Stomach (tissue), 19 donors: ENCODE measurements at regions of chr2 and their contacts with region 1.

Region 1: DNA sequence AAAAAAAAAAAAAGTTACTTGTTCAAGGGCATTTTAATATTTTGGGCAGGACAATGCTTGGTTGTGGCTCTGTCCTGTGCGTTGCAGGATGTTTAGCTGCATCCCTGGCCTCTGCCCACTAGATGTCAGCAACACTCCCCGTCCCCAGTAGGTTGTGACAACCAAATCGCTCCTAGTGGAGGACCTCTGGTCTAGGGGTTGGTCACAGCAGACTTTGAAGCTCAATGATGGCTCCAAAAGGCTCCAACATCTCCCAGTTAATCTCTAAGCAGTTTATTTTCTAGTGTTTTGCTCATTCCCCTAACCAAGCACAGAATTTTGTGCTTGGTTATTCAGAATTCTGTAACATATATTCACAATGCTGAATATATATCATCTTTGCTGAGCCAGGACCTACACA is 67.0 kb downstream of the CHRNA1 start:
- DNase-seq: peak; percentile 51 to 82
- H3K4me3 ChIP-seq: no peak overlapping the region
- H3K27ac ChIP-seq: no peak overlapping the region
- H3K4me1 ChIP-seq: no peaks in the 10 kb centered on the region
- H3K27me3 ChIP-seq: peaks cover 0 to 1% (median 0%) of the 10 kb centered on the region in 3 donors
- CTCF ChIP-seq: peak in 5 of 7 experiments; percentile 28 to 59 (median 55)
- EP300 ChIP-seq: no peak
- POLR2A ChIP-seq: no peak

Region 2: DNA sequence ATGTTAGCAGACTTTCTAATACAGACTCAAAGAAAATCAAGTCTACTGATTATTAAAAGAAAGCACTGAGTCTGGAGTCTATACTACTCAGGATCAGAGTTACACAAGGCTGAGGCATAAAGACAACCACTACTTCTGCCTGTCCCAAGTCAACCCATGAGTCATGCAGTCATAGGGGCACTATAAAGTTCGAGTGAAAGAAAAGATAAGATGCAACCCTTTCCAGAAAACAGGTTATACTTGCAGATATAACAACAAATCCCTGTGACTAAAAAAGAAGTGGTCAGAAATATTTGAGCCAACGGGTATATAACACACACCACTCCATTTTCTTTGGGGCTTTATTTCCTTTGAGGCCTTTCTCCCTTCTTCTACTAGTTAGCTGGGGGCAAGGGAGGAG is 320.3 kb before region 1 on chr2:
- intact Hi-C with region 1: no loop called
- DNase-seq: no peak
- H3K4me3 ChIP-seq: no peak overlapping the region
- H3K27ac ChIP-seq: no peak overlapping the region
- H3K4me1 ChIP-seq: no peaks in the 10 kb centered on the region
- H3K27me3 ChIP-seq: no peaks in the 10 kb centered on the region
- CTCF ChIP-seq: no peak
- EP300 ChIP-seq: no peak
- POLR2A ChIP-seq: no peak

Region 3: GRCh38 chr2:174577967-174578589 is 119.2 kb before region 1 on chr2:
- intact Hi-C with region 1: loop called (anchors 10 kb)
- DNase-seq: peak in 1 of 2 donors; percentile 53
- H3K4me3 ChIP-seq: no peak overlapping the region
- H3K27ac ChIP-seq: no peak overlapping the region
- H3K4me1 ChIP-seq: peaks cover 0 to 52% (median 13%) of the 10 kb centered on the region in 4 donors
- H3K27me3 ChIP-seq: no peaks in the 10 kb centered on the region
- CTCF ChIP-seq: peak in 1 of 7 experiments; percentile 19
- EP300 ChIP-seq: no peak
- POLR2A ChIP-seq: no peak

Region 4: GRCh38 chr2:174729797-174730697 is 32.8 kb after region 1 on chr2:
- intact Hi-C with region 1: no loop called
- DNase-seq: peak in 1 of 2 donors; percentile 49
- H3K4me3 ChIP-seq: peak overlapping the region; percentile 33 to 53 (median 42)
- H3K27ac ChIP-seq: no peak overlapping the region
- H3K4me1 ChIP-seq: peaks cover 9 to 13% (median 11%) of the 10 kb centered on the region in 4 donors
- H3K27me3 ChIP-seq: peaks cover 0 to 54% (median 24%) of the 10 kb centered on the region in 3 donors
- CTCF ChIP-seq: no peak
- EP300 ChIP-seq: no peak
- POLR2A ChIP-seq: no peak

Region 5: DNA sequence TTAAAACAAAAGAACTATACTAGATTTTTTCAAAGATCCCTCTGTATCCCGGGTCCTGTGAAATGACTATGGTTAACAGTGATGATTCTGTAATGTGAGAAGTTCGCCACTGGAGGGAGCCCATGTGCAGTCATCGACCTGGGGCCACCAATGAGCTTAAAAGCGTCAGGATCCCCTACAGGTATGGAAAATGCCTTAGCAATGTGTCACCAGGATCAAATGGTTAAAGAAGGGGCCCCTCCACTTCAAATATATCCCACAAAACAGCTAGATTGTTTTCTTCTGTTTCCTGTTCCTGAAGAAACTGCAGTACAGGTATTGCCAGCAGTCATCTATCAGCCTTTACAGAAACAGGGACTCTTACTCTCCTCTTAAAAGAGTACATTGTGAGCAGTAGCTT is 51.7 kb after region 1 on chr2:
- intact Hi-C with region 1: no loop called
- DNase-seq: peak; percentile 63 to 85
- H3K4me3 ChIP-seq: no peak overlapping the region
- H3K27ac ChIP-seq: no peak overlapping the region
- H3K4me1 ChIP-seq: no peaks in the 10 kb centered on the region
- H3K27me3 ChIP-seq: no peaks in the 10 kb centered on the region
- CTCF ChIP-seq: peak in 5 of 7 experiments; percentile 10 to 70 (median 66)
- EP300 ChIP-seq: no peak
- POLR2A ChIP-seq: no peak

Region 6: DNA sequence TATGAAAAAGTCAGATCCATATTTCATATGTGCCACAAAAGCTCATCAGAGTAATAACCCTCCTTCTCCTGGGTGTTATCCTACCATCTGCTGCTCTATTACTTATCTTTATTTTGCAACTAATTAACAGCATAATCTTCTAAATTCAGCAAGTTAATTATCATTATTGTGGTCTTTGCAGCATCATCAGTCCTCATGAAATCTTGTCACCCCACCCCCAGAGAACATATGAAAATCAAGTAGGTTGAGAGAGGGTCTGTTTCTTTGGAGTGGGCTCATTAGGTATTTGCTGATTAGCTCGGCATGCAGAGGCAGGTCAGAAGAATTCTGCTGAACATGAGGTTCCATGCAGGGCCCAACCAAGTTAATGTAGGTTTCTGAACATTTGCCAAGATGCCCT is 405.9 kb after region 1 on chr2:
- intact Hi-C with region 1: no loop called
- DNase-seq: no peak
- H3K4me3 ChIP-seq: no peak overlapping the region
- H3K27ac ChIP-seq: no peak overlapping the region
- H3K4me1 ChIP-seq: no peaks in the 10 kb centered on the region
- H3K27me3 ChIP-seq: no peaks in the 10 kb centered on the region
- CTCF ChIP-seq: no peak
- EP300 ChIP-seq: no peak
- POLR2A ChIP-seq: no peak